ENCODE measurements at regions of chr15 and their contacts with region 1.

Region 1: GRCh38 chr15:90818251-90819210 is 49.9 kb upstream of the FURIN start:
- DNase-seq: peak; percentile 50
- ATAC-seq: peak; percentile 75
- H3K4me3 Mint-ChIP-seq: no peak overlapping the region
- H3K27ac Mint-ChIP-seq: peak overlapping the region; percentile 93
- H3K4me1 Mint-ChIP-seq: peaks cover 35% of the 10 kb centered on the region
- H3K27me3 Mint-ChIP-seq: no peaks in the 10 kb centered on the region
- CTCF ChIP-seq: no peak

Region 2: GRCh38 chr15:90571063-90571541 is 247.4 kb before region 1 on chr15:
- CTCF ChIA-PET with region 1: no interaction called
- POLR2A ChIA-PET with region 1: no interaction called
- DNase-seq: no peak
- ATAC-seq: no peak
- H3K4me3 Mint-ChIP-seq: no peak overlapping the region
- H3K27ac Mint-ChIP-seq: no peak overlapping the region
- H3K4me1 Mint-ChIP-seq: no peaks in the 10 kb centered on the region
- H3K27me3 Mint-ChIP-seq: no peaks in the 10 kb centered on the region
- CTCF ChIP-seq: no peak

Region 3: DNA sequence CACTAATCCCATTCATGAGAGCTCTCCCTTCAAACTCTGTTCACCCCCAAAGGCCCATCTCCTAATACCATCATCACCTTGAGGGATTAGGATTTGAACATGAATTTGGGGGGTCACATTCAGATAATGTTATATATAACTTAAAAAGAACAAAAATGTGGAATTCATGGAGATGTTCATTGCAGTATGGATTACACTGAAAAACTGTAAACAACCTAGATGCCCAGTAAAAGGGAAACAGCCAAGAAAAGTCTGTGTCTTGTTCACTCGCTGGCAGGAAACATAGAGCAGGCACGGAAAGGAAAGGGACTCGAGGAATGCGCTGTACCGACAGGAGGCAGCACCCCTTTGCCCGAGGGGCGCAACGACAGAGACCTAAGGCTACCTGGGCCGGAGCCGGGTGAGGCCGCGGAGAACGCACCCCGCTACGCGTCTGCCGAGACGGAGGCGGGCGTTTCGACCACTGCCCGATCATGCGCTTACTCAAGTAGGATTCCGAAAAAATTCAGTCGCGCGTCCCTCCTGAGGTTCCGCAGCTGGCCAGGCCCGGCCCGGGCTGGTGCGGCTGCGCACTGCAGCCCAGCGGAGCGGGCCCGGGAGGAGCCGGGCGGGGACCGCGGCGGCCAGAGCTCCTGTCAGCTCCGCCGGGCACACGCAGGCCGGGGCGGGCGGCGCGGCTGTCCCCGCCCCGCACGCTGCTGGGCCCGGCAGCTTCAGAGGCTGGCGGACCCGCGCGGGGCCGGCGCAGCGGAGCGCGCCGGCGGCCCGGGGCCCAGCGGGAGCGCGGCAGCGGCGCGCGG is 83.7 kb after region 1 on chr15:
- CTCF ChIA-PET with region 1: interaction called, 12 read pairs
- POLR2A ChIA-PET with region 1: no interaction called
- DNase-seq: peak; percentile 78
- ATAC-seq: peak; percentile 77
- H3K4me3 Mint-ChIP-seq: peak overlapping the region; percentile 70
- H3K27ac Mint-ChIP-seq: peak overlapping the region; percentile 41; the same call in 1 of the 2 replicates
- H3K4me1 Mint-ChIP-seq: peaks cover 23% of the 10 kb centered on the region
- H3K27me3 Mint-ChIP-seq: peaks cover 26% of the 10 kb centered on the region
- CTCF ChIP-seq: no peak